Caco-2 (cell line): ENCODE measurements at regions of chr2 and their contacts with region 1.

Region 1: DNA sequence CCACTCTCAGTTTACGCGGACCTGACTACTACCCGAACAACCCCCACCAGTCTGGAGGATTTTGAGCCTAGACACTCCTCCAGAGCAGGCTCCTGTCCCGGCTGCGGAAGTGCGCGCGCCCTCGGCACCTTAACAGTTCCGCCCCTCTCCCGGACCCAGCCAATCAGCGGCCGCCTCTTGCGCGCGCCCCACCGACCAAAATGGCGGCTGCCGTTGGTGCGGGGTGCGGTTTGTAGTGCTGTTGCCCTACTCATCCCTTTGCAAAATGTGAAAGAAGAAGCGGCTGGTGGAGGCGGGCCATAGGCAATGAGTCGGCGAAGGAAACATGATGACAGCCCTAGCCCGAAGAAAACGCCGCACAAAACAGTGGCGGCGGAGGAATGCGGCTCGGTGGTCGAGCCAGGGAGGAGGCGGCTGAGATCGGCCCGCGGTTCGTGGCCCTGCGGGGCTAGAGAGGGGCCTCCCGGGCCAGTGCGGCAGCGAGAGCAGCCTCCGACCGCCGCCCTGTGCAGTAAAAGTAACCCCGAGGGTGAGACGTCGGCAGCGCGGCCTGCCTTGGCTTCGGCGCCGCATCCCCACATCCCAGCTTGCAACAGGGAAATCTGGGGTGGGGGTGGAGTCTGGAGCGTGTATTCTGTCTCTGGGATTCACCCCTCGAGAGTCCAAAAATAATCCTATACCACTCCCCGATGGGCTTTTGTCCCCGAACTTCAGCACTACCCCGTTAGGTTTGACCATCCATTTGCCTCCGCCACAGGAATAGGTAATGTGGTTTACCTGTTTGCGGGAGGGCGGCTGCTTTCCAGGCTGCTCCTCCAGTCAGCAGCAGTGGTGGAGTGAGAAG is at the start of gene ETAA1:
- DNase-seq: peak; percentile 93 to 94
- H3K4me3 ChIP-seq: peak within 1 kb of the TSS; percentile 92
- H3K4me3 Mint-ChIP-seq: peak within 1 kb of the TSS; percentile 94
- H3K27ac Mint-ChIP-seq: peak within 1 kb of the TSS; percentile 95
- H3K4me1 ChIP-seq: peaks cover 28% of the 10 kb centered on the region
- H3K4me1 Mint-ChIP-seq: peaks cover 12% of the 10 kb centered on the region
- H3K27me3 ChIP-seq: no peaks in the 10 kb centered on the region
- H3K27me3 Mint-ChIP-seq: no peaks in the 10 kb centered on the region
- CTCF ChIP-seq: no peak
- total RNA-seq, gene ETAA1: 11.4 and 12.4 TPM in 2 replicates

Region 2: GRCh38 chr2:67295851-67296250 is 101.5 kb before region 1 on chr2:
- CTCF ChIA-PET with region 1: no interaction called
- POLR2A ChIA-PET with region 1: no interaction called
- intact Hi-C with region 1: loop called (anchors 5 kb)
- DNase-seq: peak in 1 of 2 experiments; percentile 23
- H3K4me3 ChIP-seq: no peak overlapping the region
- H3K4me3 Mint-ChIP-seq: peak overlapping the region; percentile 55
- H3K27ac Mint-ChIP-seq: peak overlapping the region; percentile 17
- H3K4me1 ChIP-seq: peaks cover 13% of the 10 kb centered on the region
- H3K4me1 Mint-ChIP-seq: peaks cover 20% of the 10 kb centered on the region
- H3K27me3 ChIP-seq: no peaks in the 10 kb centered on the region
- H3K27me3 Mint-ChIP-seq: no peaks in the 10 kb centered on the region
- CTCF ChIP-seq: no peak

Region 3: GRCh38 chr2:67455219-67456142 is 58.1 kb after region 1 on chr2:
- CTCF ChIA-PET with region 1: no interaction called
- POLR2A ChIA-PET with region 1: no interaction called
- intact Hi-C with region 1: loop called (anchors 5 kb)
- DNase-seq: peak in 1 of 2 experiments; percentile 26
- H3K4me3 ChIP-seq: no peak overlapping the region
- H3K4me3 Mint-ChIP-seq: peak overlapping the region; percentile 16
- H3K27ac Mint-ChIP-seq: no peak overlapping the region
- H3K4me1 ChIP-seq: peaks cover 18% of the 10 kb centered on the region
- H3K4me1 Mint-ChIP-seq: peaks cover 22% of the 10 kb centered on the region
- H3K27me3 ChIP-seq: no peaks in the 10 kb centered on the region
- H3K27me3 Mint-ChIP-seq: no peaks in the 10 kb centered on the region
- CTCF ChIP-seq: no peak

Region 4: DNA sequence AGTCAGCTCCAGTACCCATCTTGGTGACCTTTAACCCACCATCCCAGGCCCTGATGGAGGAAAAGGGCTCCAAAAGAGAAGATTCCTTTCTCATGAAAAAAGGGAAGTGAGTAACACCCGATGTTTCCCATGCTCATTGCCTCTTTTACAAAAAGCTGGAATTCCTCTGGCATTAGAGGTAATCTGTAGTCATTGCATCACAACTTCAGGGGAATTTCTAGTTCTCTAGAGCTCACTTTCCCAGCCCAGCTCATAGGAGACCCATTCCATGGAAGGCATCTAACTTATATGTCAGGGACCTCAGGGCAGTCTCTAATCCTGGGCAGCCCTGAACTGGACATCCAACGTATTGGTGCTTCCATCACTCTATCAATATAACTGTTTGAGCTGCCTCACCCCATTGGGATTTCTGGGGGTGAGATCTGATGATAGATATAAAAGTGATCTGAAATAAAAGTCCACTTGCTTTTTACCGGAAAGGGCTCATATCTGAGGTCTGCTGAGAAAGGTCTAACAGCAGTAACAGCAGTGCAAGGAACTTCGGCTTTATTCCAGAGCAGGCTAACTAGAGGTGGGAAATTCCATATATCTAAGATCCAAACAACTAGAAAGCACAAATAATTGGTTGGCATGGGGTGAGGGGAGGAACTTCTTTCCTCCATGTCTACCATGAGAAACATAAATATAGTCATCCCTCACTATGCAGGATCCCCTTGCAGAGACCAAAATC is 105.9 kb after region 1 on chr2:
- CTCF ChIA-PET with region 1: no interaction called
- POLR2A ChIA-PET with region 1: no interaction called
- intact Hi-C with region 1: no loop called
- DNase-seq: no peak
- H3K4me3 ChIP-seq: no peak overlapping the region
- H3K4me3 Mint-ChIP-seq: no peak overlapping the region
- H3K27ac Mint-ChIP-seq: no peak overlapping the region
- H3K4me1 ChIP-seq: no peaks in the 10 kb centered on the region
- H3K4me1 Mint-ChIP-seq: no peaks in the 10 kb centered on the region
- H3K27me3 ChIP-seq: no peaks in the 10 kb centered on the region
- H3K27me3 Mint-ChIP-seq: peaks cover 3% of the 10 kb centered on the region
- CTCF ChIP-seq: no peak